HEK293 (cell line): ENCODE measurements at regions of chr1 and their contacts with region 1.

Region 1: DNA sequence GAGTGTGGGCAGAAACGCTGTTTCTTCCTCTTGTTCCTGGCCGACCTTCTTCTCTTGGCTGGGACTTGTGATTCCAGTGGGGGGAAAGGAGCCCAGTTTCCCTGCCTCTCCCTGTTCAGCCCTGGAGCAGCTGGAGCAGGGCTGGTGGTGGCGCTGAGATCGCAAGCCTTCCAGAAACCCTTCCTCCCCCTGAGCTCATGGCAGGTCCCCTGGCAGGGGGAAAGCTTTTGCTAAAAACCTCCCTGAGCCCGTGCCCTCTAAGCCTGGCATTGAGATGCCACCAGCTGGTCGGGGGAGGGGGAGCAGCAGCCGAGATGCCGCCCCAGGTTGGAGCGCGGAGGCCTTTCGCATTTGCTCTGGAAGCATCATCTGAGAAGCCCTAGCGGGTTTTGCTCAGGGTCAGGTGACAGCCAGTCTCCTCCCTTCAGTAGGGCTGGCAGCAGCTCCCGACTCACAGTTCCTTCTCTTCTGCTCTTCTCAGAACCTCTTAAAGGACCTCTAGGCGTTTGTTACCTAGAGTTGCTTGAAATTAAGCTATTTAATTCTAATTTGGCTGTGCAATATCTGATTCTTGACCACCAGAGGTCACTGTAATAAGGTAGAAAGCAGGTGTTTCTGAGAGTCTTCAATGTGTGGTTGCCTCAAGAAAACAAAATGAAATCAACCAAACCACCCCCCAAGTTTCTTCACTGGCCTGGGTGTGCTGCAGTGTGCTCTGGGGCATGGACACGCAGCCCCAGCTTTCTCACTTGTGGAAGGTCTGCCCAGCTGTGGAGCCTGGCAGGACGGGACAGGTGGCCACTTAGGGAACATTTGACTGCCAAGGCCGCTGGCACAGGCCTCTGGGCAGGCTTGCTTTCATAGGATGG is 257.3 kb downstream of the CAMTA1 start:
- H3K4me3 ChIP-seq: no peak overlapping the region
- H3K27ac ChIP-seq: no peak overlapping the region
- H3K4me1 ChIP-seq: no peaks in the 10 kb centered on the region
- CTCF ChIP-seq: no peak

Region 2: GRCh38 chr1:7070389-7071029 is 28.0 kb after region 1 on chr1:
- CTCF ChIA-PET with region 1: interaction called, 32 read pairs
- POLR2A ChIA-PET with region 1: no interaction called
- H3K4me3 ChIP-seq: no peak overlapping the region
- H3K27ac ChIP-seq: no peak overlapping the region
- H3K4me1 ChIP-seq: no peaks in the 10 kb centered on the region
- CTCF ChIP-seq: peak; percentile 47

Region 3: GRCh38 chr1:7207875-7208646 is 165.5 kb after region 1 on chr1:
- CTCF ChIA-PET with region 1: interaction called, 45 read pairs
- POLR2A ChIA-PET with region 1: no interaction called
- H3K4me3 ChIP-seq: no peak overlapping the region
- H3K27ac ChIP-seq: no peak overlapping the region
- H3K4me1 ChIP-seq: no peaks in the 10 kb centered on the region
- CTCF ChIP-seq: peak; percentile 44; the same call in 1 of the 2 replicates

Region 4: DNA sequence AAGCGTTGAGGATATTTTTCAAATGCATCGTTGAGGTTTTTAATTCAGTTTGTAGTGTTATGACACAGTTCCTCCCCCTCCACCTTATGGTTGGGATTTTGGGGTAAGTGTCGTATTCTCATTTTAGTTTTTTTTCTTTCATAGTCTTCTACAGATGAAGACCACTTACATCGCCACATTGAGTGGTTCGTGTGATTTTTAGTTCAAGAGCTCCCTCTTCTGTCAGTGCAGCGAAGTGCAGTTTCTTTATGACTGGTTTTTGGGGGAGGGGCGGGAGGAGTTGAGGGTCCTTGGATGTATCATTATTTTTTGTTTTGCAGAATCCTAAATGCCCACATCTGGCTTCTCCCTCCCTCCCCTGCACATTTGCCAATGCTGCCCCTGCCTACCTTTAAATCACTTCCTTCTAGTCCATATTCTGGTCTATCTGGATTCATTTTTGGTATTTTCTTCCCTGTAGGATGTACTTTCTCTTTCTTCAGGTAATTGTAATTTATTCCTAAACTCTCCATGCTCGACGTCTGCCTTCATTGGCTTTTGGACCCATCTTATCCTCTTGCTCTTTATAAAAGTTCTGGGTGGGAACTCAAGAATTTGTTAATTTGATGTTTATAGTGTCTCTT is 175.8 kb after region 1 on chr1:
- CTCF ChIA-PET with region 1: interaction called, 13 read pairs
- POLR2A ChIA-PET with region 1: no interaction called
- H3K4me3 ChIP-seq: no peak overlapping the region
- H3K27ac ChIP-seq: no peak overlapping the region
- H3K4me1 ChIP-seq: no peaks in the 10 kb centered on the region
- CTCF ChIP-seq: peak; percentile 74

Region 5: DNA sequence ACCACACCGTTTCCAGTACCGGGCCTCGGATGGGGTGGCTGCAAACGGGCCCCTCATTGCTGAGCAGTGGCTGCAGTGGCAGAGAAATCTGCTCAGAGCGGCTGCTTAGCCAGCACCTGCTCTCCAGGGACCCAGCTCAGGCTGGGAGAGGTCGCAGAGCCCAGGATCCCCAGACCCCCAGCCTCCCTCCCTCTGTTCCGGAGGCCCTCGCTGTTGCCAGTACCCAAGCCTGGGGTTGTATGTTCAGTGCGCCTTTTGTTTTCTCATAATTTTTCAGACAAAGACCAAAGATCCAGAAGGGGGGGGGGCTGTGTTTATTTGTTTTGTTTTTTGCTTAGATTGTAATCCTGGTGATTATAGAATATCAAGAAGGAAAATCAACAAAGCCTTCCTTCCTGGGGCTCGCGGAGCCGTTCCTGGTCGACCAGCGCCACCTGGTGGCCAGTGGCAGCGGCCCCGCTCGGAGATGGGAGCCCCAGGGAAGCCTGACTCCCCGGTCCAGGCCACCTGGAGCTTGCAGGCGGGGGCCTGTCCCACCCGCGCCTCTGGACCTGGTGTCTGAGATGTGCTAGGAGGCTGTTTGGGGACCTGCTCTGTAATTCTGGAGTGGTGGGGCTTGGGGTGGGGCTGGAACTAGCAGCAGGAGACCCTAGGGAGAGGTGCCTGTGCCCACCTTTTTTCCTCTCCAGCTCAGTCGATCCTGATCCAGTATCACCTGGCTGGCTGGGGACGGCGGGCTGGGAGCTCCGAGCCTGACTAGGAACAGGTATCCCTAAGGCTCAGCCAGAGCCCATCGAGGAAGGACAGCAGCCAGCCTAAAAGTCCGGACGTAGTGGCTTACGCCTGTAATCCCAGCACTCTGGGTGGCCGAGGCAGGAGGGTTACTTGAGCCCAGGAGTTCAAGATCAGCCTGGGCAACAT is 604.7 kb after region 1 on chr1:
- CTCF ChIA-PET with region 1: interaction called, 26 read pairs
- POLR2A ChIA-PET with region 1: no interaction called
- H3K4me3 ChIP-seq: no peak overlapping the region
- H3K27ac ChIP-seq: no peak overlapping the region
- H3K4me1 ChIP-seq: no peaks in the 10 kb centered on the region
- CTCF ChIP-seq: peak; percentile 56